Activated CD8-positive, alpha-beta T cell treated with anti-CD3 and anti-CD28 coated beads for 36 hours (primary cell): ENCODE measurements at regions of chr2 and their contacts with region 1.

Region 1: GRCh38 chr2:238108423-238109183 is 8.5 kb downstream of the ESPNL start:
- DNase-seq: peak; percentile 45
- ATAC-seq: peak; percentile 64
- H3K4me3 Mint-ChIP-seq: no peak overlapping the region
- H3K27ac Mint-ChIP-seq: no peak overlapping the region
- H3K4me1 Mint-ChIP-seq: peaks cover 2% of the 10 kb centered on the region
- H3K27me3 Mint-ChIP-seq: no peaks in the 10 kb centered on the region
- CTCF ChIP-seq: no peak

Region 2: DNA sequence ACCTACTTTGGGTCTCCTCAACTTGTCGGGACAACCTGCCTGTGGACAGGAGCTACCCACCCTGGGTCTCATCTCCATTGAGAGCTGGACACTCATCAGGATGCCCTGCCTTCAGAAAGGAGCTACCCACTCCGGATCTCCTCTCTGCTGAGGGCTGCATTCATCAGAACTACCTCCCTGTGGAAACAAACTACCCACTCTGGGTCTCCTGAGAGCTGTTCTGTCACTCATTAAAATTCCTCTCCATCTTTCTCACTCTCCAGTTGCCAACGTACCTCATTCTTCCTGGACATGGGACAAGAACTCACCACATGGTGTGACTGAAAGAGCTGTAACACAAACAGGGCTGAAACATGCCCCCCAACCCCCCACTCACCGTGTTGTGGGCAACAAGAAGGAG is 164.3 kb before region 1 on chr2:
- CTCF ChIA-PET with region 1: no interaction called
- POLR2A ChIA-PET with region 1: no interaction called
- intact Hi-C with region 1: no loop called
- DNase-seq: no peak
- ATAC-seq: no peak
- H3K4me3 Mint-ChIP-seq: no peak overlapping the region
- H3K27ac Mint-ChIP-seq: no peak overlapping the region
- H3K4me1 Mint-ChIP-seq: peaks cover 41% of the 10 kb centered on the region
- H3K27me3 Mint-ChIP-seq: no peaks in the 10 kb centered on the region
- CTCF ChIP-seq: no peak

Region 3: GRCh38 chr2:238139196-238140039 is 30.8 kb after region 1 on chr2:
- CTCF ChIA-PET with region 1: interaction called, 11 read pairs
- POLR2A ChIA-PET with region 1: no interaction called
- intact Hi-C with region 1: no loop called
- DNase-seq: peak; percentile 39
- ATAC-seq: peak; percentile 57
- H3K4me3 Mint-ChIP-seq: no peak overlapping the region
- H3K27ac Mint-ChIP-seq: no peak overlapping the region
- H3K4me1 Mint-ChIP-seq: peaks cover 11% of the 10 kb centered on the region
- H3K27me3 Mint-ChIP-seq: no peaks in the 10 kb centered on the region
- CTCF ChIP-seq: peak; percentile 71